ENCODE measurements at regions of chr6 and their contacts with region 1.

Region 1: DNA sequence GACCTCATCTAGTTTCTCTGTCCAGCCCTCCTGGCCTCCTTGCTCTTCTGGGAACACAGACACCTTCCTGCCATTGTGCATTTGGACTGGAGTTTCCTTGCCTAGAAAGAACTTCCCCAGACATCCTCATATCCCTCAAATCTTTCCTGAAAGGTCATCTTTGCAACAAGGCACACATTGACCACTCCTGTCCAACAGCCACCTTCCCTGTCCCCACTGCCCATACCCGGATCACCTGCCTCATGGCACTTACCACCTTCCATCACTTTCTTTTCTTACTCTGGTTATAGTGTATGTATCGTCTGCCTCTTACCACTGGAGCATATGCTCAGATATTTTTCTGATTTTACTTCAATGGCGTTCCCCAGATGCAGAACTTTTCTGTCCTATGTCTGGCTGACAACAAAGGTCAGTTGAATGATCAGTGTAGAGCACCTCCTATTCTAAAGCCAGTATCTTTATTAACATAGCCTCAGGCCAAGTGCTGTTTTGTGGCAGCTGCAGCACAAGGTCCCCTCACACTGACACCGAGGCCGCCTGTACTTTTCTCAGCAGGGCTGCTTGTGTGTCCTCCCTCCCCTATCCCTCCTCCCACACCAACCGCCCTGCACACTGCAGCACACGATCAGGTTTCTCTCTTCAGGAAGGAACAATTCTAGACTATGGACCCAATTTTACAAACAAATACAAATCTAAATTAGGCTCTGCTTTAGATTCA is 4.1 kb downstream of the HLA-C start:
- DNase-seq: no peak
- ATAC-seq: no peak

Region 2: DNA sequence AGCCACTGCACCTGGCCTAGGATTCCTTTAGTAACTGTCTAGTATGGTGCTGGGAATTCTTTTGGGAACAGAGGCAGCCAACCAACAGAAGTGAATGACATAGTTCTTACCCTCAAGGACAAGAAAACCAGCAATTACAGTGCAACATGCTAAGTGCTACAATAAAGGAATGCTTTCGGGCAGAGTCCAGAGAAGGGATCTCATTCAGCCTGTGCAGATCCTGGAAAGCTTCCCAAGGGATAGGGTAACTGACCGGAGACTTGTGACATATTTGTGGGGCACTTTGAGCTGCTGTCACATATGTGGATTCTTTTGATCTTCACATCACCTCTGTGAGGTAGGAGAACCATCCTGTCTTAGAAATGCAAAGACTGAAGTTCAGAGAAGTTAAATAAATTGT is 202.3 kb before region 1 on chr6:
- intact Hi-C with region 1: no loop called
- DNase-seq: no peak
- ATAC-seq: no peak

Region 3: DNA sequence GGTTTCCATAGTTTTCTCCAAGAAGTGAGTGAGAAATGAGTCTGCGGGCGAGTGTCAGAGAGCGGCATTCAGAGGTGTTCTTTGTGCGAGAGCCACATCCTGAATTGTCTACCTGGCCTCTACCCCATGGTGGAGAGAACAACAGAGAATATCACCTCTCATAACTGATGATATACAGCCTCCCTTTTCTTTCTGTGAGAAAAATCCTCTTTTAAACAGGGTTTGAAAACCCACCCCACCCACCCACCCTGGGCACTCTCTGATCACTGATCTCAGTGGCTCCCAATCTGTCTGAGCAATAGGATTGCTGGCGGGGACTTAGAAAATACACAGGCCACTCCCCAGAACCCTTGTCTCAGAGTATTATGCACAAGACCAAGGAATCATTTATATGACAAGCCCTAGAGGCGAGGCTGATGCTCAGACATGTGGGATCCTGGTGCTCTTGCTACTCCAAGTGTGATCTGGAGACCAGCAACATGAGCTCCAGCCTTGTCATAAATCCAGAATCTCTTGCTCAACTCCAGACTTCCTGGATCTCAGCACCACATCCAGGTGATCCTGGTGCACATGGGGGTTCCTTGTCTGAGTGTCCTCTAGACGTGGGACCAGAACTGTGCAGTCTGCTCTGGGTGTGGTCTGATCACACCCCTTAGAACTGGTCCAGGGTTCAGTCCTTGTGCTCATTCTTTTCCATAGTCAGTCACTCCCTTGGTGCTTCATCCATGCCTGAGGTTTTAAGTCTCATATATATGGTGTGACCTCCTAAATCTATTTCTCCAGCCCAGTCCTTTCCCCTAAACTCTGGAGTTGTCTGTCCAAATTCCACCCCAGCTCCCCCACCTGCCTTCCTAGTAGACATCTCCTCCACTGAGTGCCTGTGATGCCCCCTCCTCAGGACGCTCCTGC is 83.8 kb after region 1 on chr6:
- intact Hi-C with region 1: loop called (anchors 5 kb)
- DNase-seq: no peak
- ATAC-seq: no peak